AG04450 (cell line): ENCODE measurements at regions of chr5 and their contacts with region 1.

Region 1: DNA sequence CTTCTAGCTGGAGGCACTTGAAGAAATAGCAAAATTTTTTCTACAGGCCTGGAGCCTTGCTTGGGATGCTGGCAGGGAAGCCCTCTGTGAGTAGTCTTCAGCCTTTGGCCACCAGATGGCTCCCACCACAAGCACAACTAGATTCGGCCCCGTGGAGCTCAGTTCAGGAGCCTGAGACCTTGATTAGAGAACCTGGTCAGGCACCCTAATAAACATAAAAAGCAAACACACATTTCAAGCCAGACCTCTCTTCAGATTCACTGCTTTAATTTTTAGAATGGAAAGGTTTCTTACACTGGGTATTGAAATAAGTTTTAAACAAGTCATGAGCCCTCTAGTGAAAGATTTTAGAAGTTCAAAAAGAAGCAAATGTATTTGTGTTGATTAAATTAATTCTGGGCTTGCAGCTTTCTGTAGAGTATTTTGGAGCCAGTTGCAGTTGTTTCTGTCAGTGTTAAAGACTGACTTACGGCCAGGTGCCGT is 41.4 kb downstream of the GLRX start:
- DNase-seq: no peak
- H3K4me3 ChIP-seq: no peak overlapping the region
- H3K27ac ChIP-seq: no peak overlapping the region
- H3K27me3 ChIP-seq: no peaks in the 10 kb centered on the region
- CTCF ChIP-seq: peak; percentile 88

Region 2: DNA sequence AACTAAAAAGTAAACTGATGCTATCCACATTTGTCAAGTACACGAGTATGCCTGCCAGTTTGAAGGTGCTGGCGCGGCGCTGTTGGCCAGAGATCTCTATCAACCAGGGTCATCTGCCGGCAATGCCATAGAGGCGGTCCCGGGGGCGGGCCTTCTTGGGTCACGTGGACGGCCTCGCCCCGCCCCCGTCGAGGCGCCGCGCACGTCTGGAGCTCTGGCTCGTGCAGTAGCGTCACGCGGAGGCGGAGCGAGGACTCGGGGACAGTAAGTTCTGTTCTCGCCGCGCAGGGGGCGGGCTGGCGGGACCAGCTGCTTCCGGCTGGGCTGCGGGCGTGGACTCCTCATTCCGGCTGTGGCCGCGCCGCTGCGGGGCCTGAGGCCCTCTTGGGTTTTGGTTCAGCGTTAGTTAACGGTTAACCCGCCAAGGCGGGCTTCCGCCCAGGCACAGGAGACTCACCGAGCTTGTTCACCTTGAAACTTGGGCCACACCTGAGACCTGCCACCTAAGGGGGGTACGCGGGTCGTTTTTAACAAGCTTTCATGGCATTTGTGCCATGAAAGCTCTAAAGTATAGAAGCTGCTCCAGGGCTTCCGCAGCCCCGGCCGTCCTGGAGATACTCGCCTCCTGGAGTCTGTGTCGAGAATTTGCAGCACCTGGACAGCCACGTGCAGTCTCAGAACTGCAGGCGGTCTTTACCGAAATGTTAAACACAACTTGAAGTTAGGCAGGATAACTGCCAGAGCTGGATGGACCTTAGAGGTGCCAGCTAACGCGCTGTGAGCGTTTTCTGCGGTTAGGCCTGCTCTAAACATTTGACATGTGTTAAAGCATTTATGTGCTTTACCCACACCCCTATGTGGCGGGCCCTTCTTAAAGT is 134.3 kb before region 1 on chr5 and contains the start of gene RFESD:
- CTCF ChIA-PET with region 1: interaction called, 26 read pairs
- POLR2A ChIA-PET with region 1: no interaction called
- DNase-seq: peak; percentile 82
- H3K4me3 ChIP-seq: peak within 1 kb of the TSS; percentile 61
- H3K27ac ChIP-seq: peak within 1 kb of the TSS; percentile 82
- H3K27me3 ChIP-seq: no peaks in the 10 kb centered on the region
- CTCF ChIP-seq: 0 out of 2 replicates have a peak, but pooled peaks have one; percentile 18
- polyA plus RNA-seq, gene RFESD: 3.0 and 3.8 TPM in 2 replicates

Region 3: GRCh38 chr5:95793610-95794009 is 12.5 kb after region 1 on chr5:
- CTCF ChIA-PET with region 1: interaction called, 33 read pairs
- POLR2A ChIA-PET with region 1: no interaction called
- DNase-seq: no peak
- H3K4me3 ChIP-seq: no peak overlapping the region
- H3K27ac ChIP-seq: peak overlapping the region; percentile 22
- H3K27me3 ChIP-seq: no peaks in the 10 kb centered on the region
- CTCF ChIP-seq: no peak

Region 4: GRCh38 chr5:95822542-95823181 is 41.5 kb after region 1 on chr5 and contains the start of gene GLRX:
- CTCF ChIA-PET with region 1: interaction called, 13 read pairs
- POLR2A ChIA-PET with region 1: interaction called, 5 read pairs
- DNase-seq: peak; percentile 59
- H3K4me3 ChIP-seq: peak within 1 kb of the TSS; percentile 94
- H3K27ac ChIP-seq: peak within 1 kb of the TSS; percentile 100
- H3K27me3 ChIP-seq: no peaks in the 10 kb centered on the region
- CTCF ChIP-seq: no peak
- polyA plus RNA-seq, gene GLRX: 233 and 306 TPM in 2 replicates

Region 5: DNA sequence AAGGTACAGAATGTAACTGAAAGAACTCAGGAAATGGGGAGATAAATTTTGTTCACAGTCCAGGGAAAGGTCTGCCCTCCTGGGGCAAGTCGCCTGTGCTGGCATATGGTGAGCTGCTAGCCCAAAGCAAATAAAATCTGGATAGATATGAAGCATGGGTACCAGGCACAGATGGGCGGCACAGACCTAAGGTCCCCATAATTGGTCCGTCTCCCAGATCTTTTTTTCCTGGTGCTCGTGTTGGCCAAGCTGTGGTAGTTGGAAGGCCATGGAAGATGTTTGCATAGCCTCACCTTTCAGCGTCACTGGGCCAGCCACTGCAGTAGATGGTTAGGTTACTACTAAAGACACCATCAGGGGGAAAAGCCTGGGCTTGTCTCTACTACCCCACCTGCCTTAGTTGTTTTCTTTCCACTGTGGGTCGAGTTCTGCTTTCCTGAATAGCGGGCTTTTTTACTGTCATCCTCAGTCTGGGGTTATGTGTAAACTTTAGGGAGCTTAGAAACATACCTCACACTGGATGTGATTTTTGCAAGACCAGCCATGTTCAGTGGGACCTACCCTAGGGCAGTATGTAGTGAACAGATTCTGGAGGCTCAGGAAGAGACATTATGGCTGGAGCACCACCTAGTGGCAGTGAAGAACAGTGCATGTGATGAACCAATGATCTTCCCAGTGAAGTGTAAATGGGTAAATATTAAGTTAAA is 65.6 kb after region 1 on chr5:
- CTCF ChIA-PET with region 1: interaction called, 84 read pairs
- POLR2A ChIA-PET with region 1: interaction called, 3 read pairs
- DNase-seq: peak; percentile 59
- H3K4me3 ChIP-seq: no peak overlapping the region
- H3K27ac ChIP-seq: no peak overlapping the region
- H3K27me3 ChIP-seq: no peaks in the 10 kb centered on the region
- CTCF ChIP-seq: peak; percentile 95

Region 6: DNA sequence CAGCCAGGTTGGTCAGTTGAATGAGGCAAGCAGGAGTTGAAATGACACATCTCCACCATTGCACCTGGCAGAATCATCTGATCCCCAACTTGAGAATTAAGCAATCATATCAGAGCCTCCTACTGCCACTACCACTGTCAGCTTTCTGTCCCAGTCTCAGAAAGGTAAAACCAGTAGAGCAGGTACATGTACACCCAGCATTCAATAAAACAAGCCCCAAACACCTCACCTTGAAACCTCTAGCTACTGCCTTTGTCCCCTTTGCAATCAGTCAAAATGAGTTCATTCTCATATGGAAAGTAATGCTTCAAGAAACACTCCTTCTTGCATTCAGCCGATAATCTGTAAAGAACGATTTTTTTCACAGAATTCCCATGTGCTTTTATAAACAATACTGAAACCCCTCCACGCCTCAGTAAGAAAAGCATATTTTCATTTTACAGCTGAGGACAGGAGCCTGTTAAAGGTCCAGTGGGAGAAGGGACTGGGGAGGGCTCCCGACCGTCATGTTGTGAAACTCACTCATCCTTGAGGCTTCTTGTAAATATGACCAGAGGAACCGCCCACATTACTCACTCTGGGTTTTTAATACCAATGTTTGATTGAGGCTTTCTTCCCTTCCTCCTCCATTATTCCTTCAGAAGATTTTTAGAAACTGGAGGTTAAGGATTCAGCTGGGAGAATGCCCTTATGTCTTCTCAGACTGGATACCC is 102.6 kb after region 1 on chr5:
- CTCF ChIA-PET with region 1: no interaction called
- POLR2A ChIA-PET with region 1: no interaction called
- DNase-seq: no peak
- H3K4me3 ChIP-seq: no peak overlapping the region
- H3K27ac ChIP-seq: no peak overlapping the region
- H3K27me3 ChIP-seq: no peaks in the 10 kb centered on the region
- CTCF ChIP-seq: no peak

Region 7: GRCh38 chr5:95927927-95928723 is 147.0 kb after region 1 on chr5:
- CTCF ChIA-PET with region 1: no interaction called
- POLR2A ChIA-PET with region 1: no interaction called
- DNase-seq: no peak
- H3K4me3 ChIP-seq: no peak overlapping the region
- H3K27ac ChIP-seq: no peak overlapping the region
- H3K27me3 ChIP-seq: no peaks in the 10 kb centered on the region
- CTCF ChIP-seq: no peak

Region 8: DNA sequence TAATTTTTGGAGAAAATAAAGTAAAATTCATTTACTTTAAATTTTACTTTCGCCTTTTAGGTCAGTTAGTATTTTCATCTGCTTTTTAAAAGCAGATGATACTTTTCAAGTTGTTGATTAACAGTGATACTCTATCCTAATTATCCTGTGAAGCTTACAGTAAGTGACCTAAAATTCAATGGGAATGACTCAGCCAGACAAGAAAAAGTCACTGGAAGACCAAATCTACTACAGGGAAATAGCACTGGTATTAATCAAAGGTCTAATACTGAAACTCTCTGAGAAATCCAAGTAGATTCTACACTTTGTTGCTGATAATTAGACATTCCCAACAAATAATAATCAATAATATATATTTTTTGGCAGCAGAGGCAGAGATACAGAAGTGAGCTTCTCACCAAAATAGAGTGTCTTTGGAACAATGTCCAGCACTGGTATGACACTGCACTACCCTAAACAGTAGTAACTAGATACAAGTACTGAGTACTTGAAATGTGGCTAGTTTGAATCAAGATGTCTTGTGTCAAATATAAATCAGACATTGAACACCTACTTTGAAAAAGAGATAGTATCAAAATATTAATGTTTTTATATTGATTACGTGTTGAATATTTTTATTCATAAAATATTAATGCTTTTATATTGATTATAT is 203.3 kb after region 1 on chr5:
- CTCF ChIA-PET with region 1: no interaction called
- POLR2A ChIA-PET with region 1: no interaction called
- DNase-seq: no peak
- H3K4me3 ChIP-seq: no peak overlapping the region
- H3K27ac ChIP-seq: no peak overlapping the region
- H3K27me3 ChIP-seq: no peaks in the 10 kb centered on the region
- CTCF ChIP-seq: no peak